OCI-LY7 (cell line): ENCODE measurements at regions of chr11 and their contacts with region 1.

Region 1: DNA sequence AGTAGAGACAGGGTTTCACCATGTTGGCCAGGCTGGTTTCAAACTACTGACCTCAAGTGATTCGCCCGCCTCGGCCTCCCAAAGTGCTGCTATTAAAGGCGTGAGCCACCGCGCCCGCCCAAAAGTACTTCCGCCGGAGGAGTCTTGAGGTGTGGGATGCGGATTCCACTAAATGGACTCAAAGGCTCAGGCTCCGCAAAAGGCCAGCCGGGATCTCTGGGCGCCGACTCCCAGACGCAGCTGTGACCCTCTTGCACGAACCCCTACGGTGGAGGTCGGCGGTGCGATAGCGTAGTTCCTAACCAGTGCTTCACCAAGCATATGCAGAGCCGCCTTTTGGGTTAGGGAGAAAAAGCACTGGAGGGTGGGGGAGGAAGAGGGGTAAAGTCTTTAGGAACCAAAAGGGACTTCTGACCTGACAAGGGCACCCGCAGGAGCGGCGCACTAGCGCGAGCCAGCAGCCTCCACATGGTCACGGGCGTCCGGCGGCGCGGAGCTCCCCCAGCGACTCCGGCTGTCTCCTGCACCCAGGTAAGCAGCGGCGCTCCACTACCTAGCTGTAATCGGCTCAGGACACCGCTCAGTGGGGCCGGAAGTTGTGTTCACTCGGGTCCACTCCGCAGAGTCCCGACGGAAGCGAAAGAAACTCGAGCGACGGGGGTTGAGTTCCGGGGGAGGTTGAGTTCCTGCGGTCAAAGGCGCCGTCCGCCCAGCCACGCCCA is at the start of gene MRPL16:
- DNase-seq: peak; percentile 96
- H3K4me3 ChIP-seq: peak within 1 kb of the TSS; percentile 98
- H3K27ac ChIP-seq: peak within 1 kb of the TSS; percentile 80
- H3K4me1 ChIP-seq: peaks cover 53% of the 10 kb centered on the region
- CTCF ChIP-seq: peak; percentile 63
- total RNA-seq, gene MRPL16: 133 and 159 TPM in 2 replicates

Region 2: DNA sequence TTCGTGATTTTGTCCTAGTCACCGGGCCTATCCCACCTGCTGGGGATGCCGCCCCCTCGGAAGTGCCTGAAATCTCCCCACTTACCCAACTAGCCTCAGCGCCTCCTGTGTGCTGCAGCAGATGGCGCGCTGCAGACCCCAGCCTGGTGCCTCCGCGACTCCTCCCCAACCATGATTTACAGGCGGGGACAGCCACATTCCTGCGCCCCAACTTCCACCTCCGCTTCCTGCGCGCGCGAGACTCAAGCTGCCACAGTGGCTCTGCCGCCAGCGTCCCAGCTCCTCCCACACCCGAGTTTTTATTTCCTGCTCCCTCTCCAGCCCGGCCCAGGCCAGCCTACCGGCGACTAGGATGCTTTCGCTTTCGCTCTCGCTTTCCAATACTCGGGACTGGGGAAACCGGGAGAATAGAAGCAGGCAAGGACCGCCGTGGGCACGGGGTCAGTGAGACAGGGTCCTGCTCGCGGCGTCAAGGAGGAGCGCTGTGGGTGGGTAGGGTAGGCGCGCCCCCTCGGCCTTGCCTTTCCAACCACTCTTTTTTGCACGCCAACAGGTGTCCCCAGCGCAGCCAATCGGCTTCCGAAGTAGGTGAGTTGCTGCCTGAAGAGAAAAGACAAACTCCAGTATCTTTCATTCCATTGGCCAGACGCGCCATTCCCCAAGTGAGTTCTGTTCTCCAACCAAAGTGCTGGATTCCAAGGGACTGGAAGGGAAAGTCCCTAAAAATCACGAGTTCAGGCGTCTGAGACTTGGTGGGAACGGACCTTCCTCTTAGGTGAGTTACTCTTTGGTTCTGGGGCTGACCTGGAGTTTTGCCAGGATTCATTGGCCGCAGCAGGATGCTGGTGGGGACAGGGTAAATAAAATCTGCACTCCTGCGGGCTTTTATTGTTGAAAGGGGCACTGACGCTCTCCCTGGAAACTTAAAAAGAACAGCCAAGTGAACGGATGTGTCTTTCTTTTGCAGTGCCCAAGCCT is 667.5 kb before region 1 on chr11 and contains the start of gene FAM111A:
- CTCF ChIA-PET with region 1: no interaction called
- POLR2A ChIA-PET with region 1: interaction called, 5 read pairs
- intact Hi-C with region 1: loop called (anchors 10 kb)
- DNase-seq: peak; percentile 81
- H3K4me3 ChIP-seq: peak within 1 kb of the TSS; percentile 90
- H3K27ac ChIP-seq: peak within 1 kb of the TSS; percentile 90
- H3K4me1 ChIP-seq: peaks cover 40% of the 10 kb centered on the region
- CTCF ChIP-seq: peak; percentile 75
- total RNA-seq, gene FAM111A: 80.8 and 83.9 TPM in 2 replicates

Region 3: DNA sequence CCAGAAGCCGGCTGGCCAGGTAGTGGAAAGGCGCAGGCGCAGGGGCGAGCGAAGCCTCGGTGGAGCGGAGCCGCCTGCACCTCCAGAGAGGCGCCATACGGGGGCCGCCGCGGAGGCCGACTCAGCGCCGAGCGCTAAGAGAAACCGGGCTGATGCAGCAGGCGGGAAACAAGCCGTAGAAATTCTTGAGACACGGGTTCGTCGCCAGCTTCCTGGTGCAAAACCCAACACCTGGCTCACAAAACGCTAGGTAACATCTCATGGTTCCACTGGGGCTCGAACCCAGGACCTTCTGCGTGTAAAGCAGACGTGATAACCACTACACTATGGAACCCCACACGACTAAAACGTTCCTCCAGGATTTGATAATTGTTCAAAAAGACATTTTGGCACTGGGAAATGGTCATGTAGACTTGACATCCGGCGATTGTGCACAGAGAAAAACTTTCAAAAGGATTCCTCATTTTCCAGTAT is 259.9 kb before region 1 on chr11:
- CTCF ChIA-PET with region 1: no interaction called
- POLR2A ChIA-PET with region 1: interaction called, 5 read pairs
- intact Hi-C with region 1: loop called (anchors 5 kb)
- DNase-seq: peak; percentile 95
- H3K4me3 ChIP-seq: peak overlapping the region; percentile 72
- H3K27ac ChIP-seq: peak overlapping the region; percentile 91
- H3K4me1 ChIP-seq: peaks cover 24% of the 10 kb centered on the region
- CTCF ChIP-seq: peak; percentile 65

Region 4: GRCh38 chr11:59668950-59669610 is 141.3 kb before region 1 on chr11 and contains the start of gene PATL1:
- CTCF ChIA-PET with region 1: no interaction called
- POLR2A ChIA-PET with region 1: no interaction called
- intact Hi-C with region 1: loop called (anchors 5 kb)
- DNase-seq: peak; percentile 98
- H3K4me3 ChIP-seq: peak within 1 kb of the TSS; percentile 99
- H3K27ac ChIP-seq: peak within 1 kb of the TSS; percentile 47
- H3K4me1 ChIP-seq: peaks cover 19% of the 10 kb centered on the region
- CTCF ChIP-seq: no peak
- total RNA-seq, gene PATL1: 14.7 and 15.2 TPM in 2 replicates

Region 5: DNA sequence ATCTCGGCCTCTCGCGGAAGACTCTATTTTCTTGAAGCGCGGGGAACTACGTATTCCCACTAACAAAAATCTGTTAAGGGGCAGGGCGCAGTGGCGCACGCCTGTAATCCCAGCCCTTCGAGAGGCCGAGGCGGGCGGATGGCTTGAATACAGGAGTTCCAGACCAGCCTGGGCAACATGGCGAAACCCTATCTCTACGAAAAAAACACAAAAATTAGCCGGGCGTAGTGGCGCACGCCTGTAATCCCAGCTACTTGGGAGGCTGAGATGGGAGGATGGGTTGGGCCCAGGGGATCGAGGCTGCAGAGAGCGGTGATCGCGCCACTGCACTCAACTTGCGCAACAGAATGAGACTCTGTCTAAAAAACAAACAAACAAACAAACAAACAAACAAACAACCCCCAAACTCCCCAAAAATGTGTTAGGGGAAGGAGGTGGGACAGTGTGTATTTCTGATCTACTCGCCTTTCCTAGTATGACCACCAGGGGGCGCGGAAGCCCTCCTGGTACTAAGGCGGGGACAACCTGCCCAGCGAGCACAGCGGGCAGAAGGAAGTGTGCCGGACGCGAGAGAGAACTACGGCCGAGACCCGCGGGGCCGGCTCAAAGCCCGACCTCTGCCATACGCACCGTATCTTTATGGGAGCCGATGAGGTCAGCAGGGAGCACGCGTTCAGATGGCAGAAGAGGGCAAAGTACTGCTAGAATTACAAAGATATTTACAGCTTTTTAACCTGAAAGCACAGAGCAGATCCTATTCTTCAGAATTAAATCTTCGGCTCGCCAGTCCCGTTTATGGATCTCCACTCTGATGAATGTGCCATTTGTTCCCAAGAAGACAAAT is 56.5 kb before region 1 on chr11:
- CTCF ChIA-PET with region 1: no interaction called
- POLR2A ChIA-PET with region 1: no interaction called
- intact Hi-C with region 1: loop called (anchors 2 kb)
- DNase-seq: peak; percentile 85
- H3K4me3 ChIP-seq: peak overlapping the region; percentile 86
- H3K27ac ChIP-seq: no peak overlapping the region
- H3K4me1 ChIP-seq: peaks cover 16% of the 10 kb centered on the region
- CTCF ChIP-seq: peak; percentile 89

Region 6: GRCh38 chr11:59822989-59823566 is 12.7 kb after region 1 on chr11:
- CTCF ChIA-PET with region 1: no interaction called
- POLR2A ChIA-PET with region 1: interaction called, 15 read pairs
- intact Hi-C with region 1: no loop called
- DNase-seq: peak; percentile 84
- H3K4me3 ChIP-seq: peak overlapping the region; percentile 37
- H3K27ac ChIP-seq: peak overlapping the region; percentile 57
- H3K4me1 ChIP-seq: peaks cover 51% of the 10 kb centered on the region
- CTCF ChIP-seq: peak; percentile 85

Region 7: DNA sequence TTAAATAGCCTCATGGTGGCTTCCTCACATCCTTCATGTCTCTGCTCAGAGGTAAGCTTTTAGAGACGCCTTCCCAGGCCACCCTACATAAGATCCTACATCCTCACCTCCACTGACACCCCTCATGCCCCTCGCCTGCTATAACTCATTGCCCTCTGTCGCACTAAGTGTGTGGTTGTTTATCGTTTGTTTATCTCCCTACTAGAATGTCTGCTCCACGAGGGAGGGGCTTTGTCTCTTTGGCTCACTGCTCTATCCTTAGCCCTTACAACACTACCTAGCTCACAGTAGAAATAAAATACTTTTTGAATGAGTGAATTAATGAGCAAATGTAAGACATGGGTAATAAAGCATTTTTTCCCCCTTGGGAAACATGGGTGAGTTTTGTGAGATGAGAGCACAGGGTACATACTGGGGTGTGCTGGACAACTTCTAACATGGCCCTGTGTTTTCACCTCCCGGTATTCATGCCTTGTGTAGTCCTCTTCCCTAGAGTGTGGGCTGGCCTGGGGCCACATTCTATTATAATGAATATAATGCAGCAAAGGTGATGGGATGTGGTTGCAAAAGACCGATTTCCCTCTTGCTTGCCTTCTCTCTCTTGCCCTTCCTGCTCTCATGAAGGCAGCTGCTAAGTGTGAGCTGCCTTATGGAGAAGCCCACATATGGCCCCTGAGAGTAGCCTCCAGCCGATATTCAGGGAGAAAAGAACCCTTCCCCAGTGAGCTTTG is 36.4 kb after region 1 on chr11:
- CTCF ChIA-PET with region 1: no interaction called
- POLR2A ChIA-PET with region 1: no interaction called
- intact Hi-C with region 1: no loop called
- DNase-seq: no peak
- H3K4me3 ChIP-seq: no peak overlapping the region
- H3K27ac ChIP-seq: no peak overlapping the region
- H3K4me1 ChIP-seq: no peaks in the 10 kb centered on the region
- CTCF ChIP-seq: no peak

Region 8: GRCh38 chr11:59891781-59892181 is 81.4 kb after region 1 on chr11:
- CTCF ChIA-PET with region 1: no interaction called
- POLR2A ChIA-PET with region 1: no interaction called
- intact Hi-C with region 1: no loop called
- DNase-seq: no peak
- H3K4me3 ChIP-seq: no peak overlapping the region
- H3K27ac ChIP-seq: no peak overlapping the region
- H3K4me1 ChIP-seq: no peaks in the 10 kb centered on the region
- CTCF ChIP-seq: no peak